ENCODE measurements at regions of chr14 and their contacts with region 1.

Region 1: DNA sequence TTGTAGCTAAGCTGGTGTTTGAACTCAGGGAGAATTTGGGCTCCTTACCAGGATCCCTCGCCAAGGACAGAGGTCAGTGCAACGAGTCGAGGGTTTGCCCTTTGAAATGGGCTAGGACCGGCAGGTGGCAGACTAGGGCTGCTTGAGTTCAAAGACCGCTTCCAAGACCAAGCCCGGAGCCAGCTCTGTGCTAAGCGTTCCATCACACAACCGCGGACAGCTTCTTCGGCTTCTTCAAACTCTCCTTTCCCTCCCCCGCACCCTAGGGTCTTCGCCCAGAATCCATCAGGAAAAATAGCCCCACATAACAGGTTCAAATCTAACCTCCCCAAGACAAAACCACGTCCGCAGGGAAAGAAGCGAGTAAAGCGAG is 705 bp upstream of the FLVCR2 start:
- DNase-seq: peak; percentile 88
- H3K4me3 ChIP-seq: peak overlapping the region; percentile 31 to 53
- H3K27ac ChIP-seq: peak overlapping the region; percentile 73 to 83
- H3K4me1 ChIP-seq: peaks cover 7% of the 10 kb centered on the region
- H3K27me3 ChIP-seq: no peaks in the 10 kb centered on the region
- CTCF ChIP-seq: peak; percentile 41 to 86 (median 81)
- POLR2A ChIP-seq: no peak

Region 2: GRCh38 chr14:75469606-75470237 is 108.0 kb before region 1 on chr14:
- intact Hi-C with region 1: no loop called
- DNase-seq: peak; percentile 88
- H3K4me3 ChIP-seq: peak overlapping the region in 1 of 2 donors; percentile 0
- H3K27ac ChIP-seq: peak overlapping the region in 1 of 2 donors; percentile 28
- H3K4me1 ChIP-seq: no peaks in the 10 kb centered on the region
- H3K27me3 ChIP-seq: no peaks in the 10 kb centered on the region
- CTCF ChIP-seq: peak in 1 of 4 experiments; percentile 7
- POLR2A ChIP-seq: no peak

Region 3: DNA sequence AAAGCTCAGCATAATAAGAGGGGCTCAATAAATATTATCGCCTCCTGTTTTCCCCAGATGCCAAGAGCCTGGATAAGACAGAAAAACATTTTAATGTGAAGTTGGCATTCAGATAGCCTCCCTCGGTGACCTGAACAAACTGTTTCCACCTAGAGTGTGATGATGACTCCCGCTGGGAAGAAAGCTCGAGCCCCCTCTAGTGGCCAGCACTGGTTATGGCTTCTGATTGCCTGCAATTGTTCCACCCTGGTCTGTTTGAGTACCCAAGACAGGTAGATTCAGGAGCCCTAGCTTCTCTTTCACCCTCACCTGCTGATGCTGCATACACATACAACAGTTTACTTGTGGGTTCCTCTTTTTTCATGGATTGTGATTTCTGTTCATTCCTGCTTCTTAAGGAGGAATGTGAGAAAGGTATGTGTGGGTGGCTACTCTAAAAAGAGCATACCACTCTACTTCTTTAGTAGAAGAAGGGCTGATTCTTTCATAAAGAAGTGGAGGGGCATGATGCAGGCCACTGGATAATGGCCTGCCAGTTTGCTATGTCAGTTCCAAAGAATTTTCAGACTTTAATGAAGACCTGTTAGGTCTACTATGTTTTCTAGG is 76.5 kb after region 1 on chr14:
- intact Hi-C with region 1: loop called (anchors 1 kb)
- DNase-seq: peak; percentile 78
- H3K4me3 ChIP-seq: no peak overlapping the region
- H3K27ac ChIP-seq: no peak overlapping the region
- H3K4me1 ChIP-seq: no peaks in the 10 kb centered on the region
- H3K27me3 ChIP-seq: no peaks in the 10 kb centered on the region
- CTCF ChIP-seq: peak; percentile 89 to 95 (median 94)
- POLR2A ChIP-seq: no peak